ENCODE measurements at regions of chr11 and their contacts with region 1.

Region 1: DNA sequence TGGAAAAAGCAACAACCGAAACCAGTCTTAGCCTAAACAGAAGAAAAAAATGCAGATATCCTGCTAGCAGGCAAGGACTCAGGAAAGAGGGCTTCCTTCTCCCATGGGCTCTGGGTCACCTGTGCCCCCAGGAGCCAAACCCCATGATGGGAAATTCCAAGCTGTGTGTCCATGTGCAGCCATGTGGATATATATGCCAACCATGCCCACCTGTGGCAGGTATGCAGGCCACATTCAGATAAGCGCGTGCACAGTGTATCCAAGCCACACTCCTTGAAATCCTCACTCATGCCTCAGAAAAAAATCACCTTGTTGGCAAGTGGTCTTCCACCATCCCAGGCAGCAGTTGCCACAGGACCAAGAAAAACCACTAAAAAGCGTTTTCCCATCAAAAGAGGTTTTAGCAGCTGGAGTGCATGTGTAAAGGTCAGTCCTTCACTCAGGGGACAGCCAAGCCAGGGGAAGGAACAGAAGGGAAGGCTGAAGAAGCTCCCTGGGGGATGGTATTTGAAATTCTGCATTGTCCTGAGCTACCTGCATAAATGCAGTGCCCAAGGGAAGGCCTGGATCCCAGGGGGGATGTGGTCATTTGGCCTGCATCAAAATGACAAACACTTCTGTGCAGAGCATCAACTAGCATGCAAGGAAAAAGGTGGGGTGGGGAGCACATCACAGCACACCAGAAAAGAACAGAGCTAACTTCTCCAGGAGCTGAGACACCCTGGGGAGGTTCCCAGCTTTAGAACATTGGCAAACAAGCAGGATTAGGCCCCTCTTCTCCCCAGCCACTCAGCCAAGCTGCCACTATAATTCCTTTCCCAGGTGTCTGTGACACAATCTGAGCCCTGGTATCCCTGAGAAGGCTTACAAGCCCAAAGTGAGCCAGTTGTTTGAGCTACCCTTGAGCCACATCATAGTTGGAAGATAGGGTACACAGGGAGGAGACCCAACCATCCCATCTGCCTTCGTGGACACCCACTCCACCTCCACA is 76.2 kb downstream of the GALNT18 start:
- DNase-seq: no peak
- ATAC-seq: peak; percentile 17

Region 2: DNA sequence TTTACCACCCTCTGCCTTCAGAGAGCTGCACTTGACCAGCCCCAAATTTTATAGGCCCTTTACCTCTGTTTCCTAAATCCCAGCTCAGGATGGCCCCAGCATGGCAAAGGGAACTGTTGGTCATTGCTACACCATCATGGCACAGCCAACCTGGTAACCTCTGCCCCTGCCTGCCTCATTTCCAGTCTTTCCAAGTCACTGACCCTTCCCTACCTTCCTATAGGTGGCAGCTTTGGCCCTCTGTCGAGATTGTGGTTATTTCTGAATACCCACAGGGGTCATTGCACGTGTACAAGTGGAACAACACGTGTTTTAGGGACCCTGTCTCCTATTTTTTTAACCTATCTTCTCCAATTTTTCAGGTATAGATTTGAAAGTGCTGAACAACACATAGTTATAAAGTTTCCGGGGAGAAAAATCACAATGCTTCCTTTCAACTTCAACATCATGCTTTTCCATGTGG is 73.4 kb after region 1 on chr11:
- intact Hi-C with region 1: loop called (anchors 10 kb)
- DNase-seq: no peak
- ATAC-seq: no peak

Measured in left ventricle myocardium superior (tissue), 1 donor.